ENCODE measurements at regions of chr3 and their contacts with region 1.

Region 1: DNA sequence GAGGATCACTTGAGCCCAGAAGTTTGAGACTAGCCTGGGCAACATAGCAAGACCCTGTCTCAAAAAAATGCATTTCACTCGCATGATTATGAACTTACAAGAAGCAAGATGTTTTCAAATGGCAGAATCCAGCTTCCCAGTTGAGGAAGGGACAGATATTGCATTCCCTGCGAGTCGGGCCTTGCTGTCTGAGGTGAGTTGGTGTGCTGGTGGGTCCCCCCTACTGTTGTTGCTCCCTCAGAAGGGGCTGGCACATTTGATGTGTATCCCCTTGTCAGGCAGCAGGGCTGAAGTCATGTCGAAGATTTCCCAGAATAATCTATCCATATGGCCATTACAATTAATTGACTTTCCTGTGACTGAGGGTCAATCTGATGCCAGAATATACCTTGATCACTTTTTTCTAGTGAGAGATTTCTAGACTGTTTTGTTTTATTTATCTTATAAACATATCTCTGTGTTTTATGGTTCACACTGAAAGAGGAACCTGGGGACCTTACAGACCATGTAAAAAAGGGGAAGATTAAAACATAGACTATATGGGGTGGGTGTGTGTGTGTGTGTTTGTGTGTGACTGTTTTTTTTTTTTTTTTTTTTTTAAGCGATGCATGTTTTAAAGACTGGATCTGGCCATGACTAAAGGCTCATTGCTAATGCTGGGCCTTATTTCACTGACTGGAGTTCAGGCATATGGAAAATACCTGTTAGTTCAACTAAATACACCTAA is 112.1 kb upstream of the MRPS22 start:
- DNase-seq: no peak
- H3K4me3 ChIP-seq: no peak overlapping the region
- H3K27me3 ChIP-seq: peaks cover 2% of the 10 kb centered on the region; the same call in 1 of the 2 replicates
- CTCF ChIP-seq: no peak

Region 2: GRCh38 chr3:139180489-139180888 is 51.2 kb before region 1 on chr3:
- CTCF ChIA-PET with region 1: no interaction called
- POLR2A ChIA-PET with region 1: interaction called, 12 read pairs
- DNase-seq: no peak
- H3K4me3 ChIP-seq: no peak overlapping the region
- H3K27me3 ChIP-seq: no peaks in the 10 kb centered on the region
- CTCF ChIP-seq: no peak

Region 3: DNA sequence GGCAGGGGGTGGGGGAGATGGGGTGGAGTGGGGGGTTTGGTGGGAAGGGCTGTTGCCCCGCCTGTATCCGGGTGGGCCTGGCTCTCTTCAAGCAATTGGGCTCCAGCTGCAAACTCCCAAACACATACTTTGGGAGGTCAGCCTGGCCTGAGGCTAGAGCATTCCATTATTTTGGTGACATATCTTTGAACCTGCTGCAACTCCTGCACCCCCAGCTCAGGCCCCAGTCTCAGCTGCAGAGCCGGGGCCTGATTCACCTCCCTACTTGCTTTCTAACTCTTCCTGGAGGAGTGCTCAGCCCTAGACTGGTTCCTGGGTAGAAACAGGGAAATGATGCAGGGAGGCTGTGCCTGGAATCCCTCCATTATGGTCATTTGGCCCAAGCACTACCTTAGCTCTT is 46.2 kb before region 1 on chr3:
- CTCF ChIA-PET with region 1: no interaction called
- POLR2A ChIA-PET with region 1: interaction called, 12 read pairs
- DNase-seq: no peak
- H3K4me3 ChIP-seq: no peak overlapping the region
- H3K27me3 ChIP-seq: no peaks in the 10 kb centered on the region
- CTCF ChIP-seq: no peak